Colonic mucosa (tissue), 4 donors: ENCODE measurements at regions of chr2 and their contacts with region 1.

Region 1: GRCh38 chr2:65064728-65065552 is 8.7 kb downstream of the CEP68 start:
- DNase-seq: peak; percentile 59
- H3K4me3 ChIP-seq: no peak overlapping the region
- H3K27ac ChIP-seq: peak overlapping the region; percentile 49
- H3K4me1 ChIP-seq: peaks cover 7% of the 10 kb centered on the region
- H3K27me3 ChIP-seq: no peaks in the 10 kb centered on the region
- CTCF ChIP-seq: peak; percentile 66

Region 2: GRCh38 chr2:64932371-64933216 is 132.3 kb before region 1 on chr2:
- intact Hi-C with region 1: no loop called
- DNase-seq: no peak
- H3K4me3 ChIP-seq: no peak overlapping the region
- H3K27ac ChIP-seq: no peak overlapping the region
- H3K4me1 ChIP-seq: no peaks in the 10 kb centered on the region
- H3K27me3 ChIP-seq: no peaks in the 10 kb centered on the region
- CTCF ChIP-seq: no peak

Region 3: GRCh38 chr2:65186872-65187851 is 122.2 kb after region 1 on chr2:
- intact Hi-C with region 1: loop called (anchors 5 kb)
- DNase-seq: peak; percentile 93
- H3K4me3 ChIP-seq: no peak overlapping the region
- H3K27ac ChIP-seq: peak overlapping the region; percentile 73
- H3K4me1 ChIP-seq: no peaks in the 10 kb centered on the region
- H3K27me3 ChIP-seq: no peaks in the 10 kb centered on the region
- CTCF ChIP-seq: peak; percentile 78

Region 4: DNA sequence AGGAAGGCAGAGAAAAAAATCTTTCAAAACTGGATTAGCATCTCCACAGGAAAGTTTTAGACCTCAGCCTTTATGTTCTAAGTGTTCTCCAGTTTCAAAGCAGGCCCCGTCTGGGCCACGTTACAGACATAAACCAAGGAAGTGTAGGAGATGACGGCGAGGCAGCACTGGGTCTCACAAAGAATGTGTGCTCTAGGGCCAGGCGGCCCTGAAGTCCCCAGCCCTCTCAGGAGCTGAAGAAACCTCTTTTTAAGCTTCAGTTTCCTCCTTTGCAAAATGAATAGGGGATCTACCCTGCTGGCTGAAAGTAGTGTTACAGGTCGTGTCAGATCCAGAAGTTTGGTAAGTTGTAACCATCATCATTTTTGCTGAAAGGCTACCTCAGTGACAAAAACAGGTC is 285.7 kb after region 1 on chr2:
- intact Hi-C with region 1: no loop called
- DNase-seq: no peak
- H3K4me3 ChIP-seq: no peak overlapping the region
- H3K27ac ChIP-seq: peak overlapping the region; percentile 28
- H3K4me1 ChIP-seq: peaks cover 23% of the 10 kb centered on the region
- H3K27me3 ChIP-seq: no peaks in the 10 kb centered on the region
- CTCF ChIP-seq: peak; percentile 20

Region 5: GRCh38 chr2:65576861-65577601 is 512.1 kb after region 1 on chr2:
- intact Hi-C with region 1: loop called (anchors 5 kb)
- DNase-seq: no peak
- H3K4me3 ChIP-seq: no peak overlapping the region
- H3K27ac ChIP-seq: no peak overlapping the region
- H3K4me1 ChIP-seq: no peaks in the 10 kb centered on the region
- H3K27me3 ChIP-seq: no peaks in the 10 kb centered on the region
- CTCF ChIP-seq: no peak